Natural killer cell (primary cell): ENCODE measurements at regions of chr15 and their contacts with region 1.

Region 1: DNA sequence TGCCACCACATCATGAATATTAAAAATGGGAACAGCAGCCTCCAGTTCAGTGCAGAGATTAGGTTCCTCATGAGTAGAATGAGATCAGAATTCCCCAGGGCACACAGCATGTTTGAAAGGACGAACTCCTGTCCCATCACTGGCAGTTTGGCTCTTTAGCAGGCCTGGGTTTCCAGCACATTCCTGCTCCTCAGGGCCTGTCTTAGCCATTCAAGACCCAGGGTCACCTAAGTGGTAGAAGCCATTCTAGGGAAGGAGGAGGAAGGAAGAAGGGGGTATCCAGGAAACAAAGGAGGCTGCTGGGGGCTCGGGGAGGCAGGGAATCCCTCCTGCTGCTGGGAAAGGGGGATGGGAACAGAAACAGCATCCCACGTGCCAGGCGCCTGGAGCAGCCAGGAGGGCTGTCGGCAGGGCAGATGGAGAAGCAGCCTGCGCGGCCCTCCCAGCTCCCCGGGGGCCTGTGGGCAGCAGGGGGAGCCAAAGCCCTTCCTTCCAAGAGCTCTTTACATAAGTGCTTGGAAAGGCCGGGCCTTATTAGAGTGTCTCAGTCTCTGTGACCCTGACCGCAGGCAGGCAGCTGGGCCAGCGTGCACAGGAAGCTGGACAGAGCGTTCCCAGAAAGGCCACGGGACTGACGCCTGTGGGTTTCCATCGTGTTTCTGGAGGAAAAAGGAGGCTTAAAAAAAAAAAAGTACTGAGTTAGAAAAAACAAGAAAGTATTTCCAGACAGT is 24.7 kb downstream of the LOXL1 start:
- DNase-seq: peak; percentile 50 to 84
- ATAC-seq: peak; percentile 75 to 94 (median 92)
- H3K4me3 ChIP-seq: no peak overlapping the region
- H3K4me3 Mint-ChIP-seq: no peak overlapping the region
- H3K27ac ChIP-seq: no peak overlapping the region
- H3K27ac Mint-ChIP-seq: peak overlapping the region; percentile 15 to 77
- H3K4me1 ChIP-seq: peaks cover 14% of the 10 kb centered on the region
- H3K4me1 Mint-ChIP-seq: peaks cover 9% of the 10 kb centered on the region in 2 donors
- H3K27me3 ChIP-seq: no peaks in the 10 kb centered on the region
- H3K27me3 Mint-ChIP-seq: peaks cover 0 to under 1% of the 10 kb centered on the region in 2 donors
- CTCF ChIP-seq: peak; percentile 56

Region 2: DNA sequence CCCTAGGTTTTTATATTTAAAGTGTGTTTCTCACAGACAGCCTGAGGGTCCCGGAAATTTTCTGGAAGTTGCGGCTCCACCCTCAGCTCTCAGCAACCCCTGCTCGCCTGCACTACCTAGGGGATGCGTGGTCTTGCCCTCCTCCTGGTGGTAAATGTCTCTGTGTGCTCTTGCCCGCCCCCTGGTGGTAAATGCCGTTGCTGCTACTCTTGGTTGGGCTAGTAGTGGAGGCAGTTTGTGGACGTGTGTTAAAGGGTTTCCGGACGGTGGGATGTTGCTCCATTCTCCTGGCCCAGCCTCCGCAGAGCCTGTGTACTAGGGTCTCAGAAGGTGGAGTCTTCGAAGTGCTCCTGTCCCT is 13.7 kb after region 1 on chr15:
- intact Hi-C with region 1: loop called (anchors 1 kb)
- DNase-seq: peak; percentile 81 to 93
- ATAC-seq: peak; percentile 95 to 98 (median 97)
- H3K4me3 ChIP-seq: no peak overlapping the region
- H3K4me3 Mint-ChIP-seq: peak overlapping the region; percentile 8
- H3K27ac ChIP-seq: no peak overlapping the region
- H3K27ac Mint-ChIP-seq: no peak overlapping the region
- H3K4me1 ChIP-seq: peaks cover 20% of the 10 kb centered on the region
- H3K4me1 Mint-ChIP-seq: peaks cover 20 to 27% of the 10 kb centered on the region in 2 donors
- H3K27me3 ChIP-seq: no peaks in the 10 kb centered on the region
- H3K27me3 Mint-ChIP-seq: peaks cover 3 to 7% of the 10 kb centered on the region in 2 donors
- CTCF ChIP-seq: peak; percentile 93